ENCODE measurements at regions of chr4 and their contacts with region 1.

Region 1: GRCh38 chr4:11053601-11054220 is 369.1 kb upstream of the CLNK start:
- DNase-seq: no peak
- ATAC-seq: no peak
- H3K4me3 ChIP-seq: no peak overlapping the region
- H3K27ac ChIP-seq: no peak overlapping the region
- H3K4me1 ChIP-seq: no peaks in the 10 kb centered on the region
- H3K27me3 ChIP-seq: no peaks in the 10 kb centered on the region
- CTCF ChIP-seq: no peak
- POLR2A ChIP-seq: no peak

Region 2: DNA sequence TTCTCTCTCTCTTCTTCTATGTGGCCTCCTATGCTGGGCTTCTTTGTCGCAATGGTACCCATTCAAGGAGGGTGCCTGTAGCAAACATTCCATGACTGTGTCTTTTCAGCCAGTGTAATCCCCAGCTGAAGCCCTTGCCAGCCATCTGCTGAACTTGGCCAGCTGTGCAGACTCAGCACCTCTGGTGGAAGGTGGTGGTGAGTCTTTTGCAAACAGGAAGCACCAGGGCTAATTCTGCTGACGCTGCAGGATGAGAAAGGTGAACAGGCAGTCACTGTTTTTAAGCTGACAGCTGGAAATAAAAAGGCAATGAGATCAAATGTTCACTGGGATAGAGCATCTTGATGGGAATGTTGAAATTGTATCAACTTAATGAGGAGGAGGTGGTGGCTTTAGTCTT is 70.4 kb before region 1 on chr4:
- intact Hi-C with region 1: no loop called
- DNase-seq: no peak
- ATAC-seq: no peak
- H3K4me3 ChIP-seq: no peak overlapping the region
- H3K27ac ChIP-seq: no peak overlapping the region
- H3K4me1 ChIP-seq: no peaks in the 10 kb centered on the region
- H3K27me3 ChIP-seq: no peaks in the 10 kb centered on the region
- CTCF ChIP-seq: no peak
- POLR2A ChIP-seq: no peak

Region 3: GRCh38 chr4:11037637-11038036 is 16.1 kb before region 1 on chr4:
- intact Hi-C with region 1: loop called in 1 of 10 experiments (anchors 1 kb)
- DNase-seq: no peak
- ATAC-seq: no peak
- H3K4me3 ChIP-seq: no peak overlapping the region
- H3K27ac ChIP-seq: no peak overlapping the region
- H3K4me1 ChIP-seq: peaks cover 0 to 8% (median 0%) of the 10 kb centered on the region in 12 donors
- H3K27me3 ChIP-seq: peaks cover 0 to 6% (median 0%) of the 10 kb centered on the region in 9 donors
- CTCF ChIP-seq: no peak
- POLR2A ChIP-seq: no peak

Measured in heart left ventricle (tissue), 16 donors.